Caco-2 (cell line): ENCODE measurements at regions of chr14 and their contacts with region 1.

Region 1: GRCh38 chr14:28608851-28609828 is 157.4 kb upstream of the FOXG1 start:
- DNase-seq: peak; percentile 51 to 60
- H3K4me3 ChIP-seq: no peak overlapping the region
- H3K4me3 Mint-ChIP-seq: no peak overlapping the region
- H3K27ac Mint-ChIP-seq: no peak overlapping the region
- H3K4me1 ChIP-seq: no peaks in the 10 kb centered on the region
- H3K4me1 Mint-ChIP-seq: no peaks in the 10 kb centered on the region
- H3K27me3 ChIP-seq: no peaks in the 10 kb centered on the region
- H3K27me3 Mint-ChIP-seq: peaks cover 2% of the 10 kb centered on the region
- CTCF ChIP-seq: peak; percentile 66 to 87

Region 2: GRCh38 chr14:27612121-27612520 is 997.0 kb before region 1 on chr14:
- CTCF ChIA-PET with region 1: no interaction called
- POLR2A ChIA-PET with region 1: no interaction called
- intact Hi-C with region 1: no loop called
- DNase-seq: no peak
- H3K4me3 ChIP-seq: no peak overlapping the region
- H3K4me3 Mint-ChIP-seq: no peak overlapping the region
- H3K27ac Mint-ChIP-seq: no peak overlapping the region
- H3K4me1 ChIP-seq: no peaks in the 10 kb centered on the region
- H3K4me1 Mint-ChIP-seq: no peaks in the 10 kb centered on the region
- H3K27me3 ChIP-seq: no peaks in the 10 kb centered on the region
- H3K27me3 Mint-ChIP-seq: no peaks in the 10 kb centered on the region
- CTCF ChIP-seq: no peak

Region 3: GRCh38 chr14:28294834-28295440 is 314.2 kb before region 1 on chr14:
- CTCF ChIA-PET with region 1: no interaction called
- POLR2A ChIA-PET with region 1: no interaction called
- intact Hi-C with region 1: loop called (anchors 1 kb)
- DNase-seq: peak in 1 of 2 experiments; percentile 17
- H3K4me3 ChIP-seq: no peak overlapping the region
- H3K4me3 Mint-ChIP-seq: no peak overlapping the region
- H3K27ac Mint-ChIP-seq: no peak overlapping the region
- H3K4me1 ChIP-seq: no peaks in the 10 kb centered on the region
- H3K4me1 Mint-ChIP-seq: no peaks in the 10 kb centered on the region
- H3K27me3 ChIP-seq: no peaks in the 10 kb centered on the region
- H3K27me3 Mint-ChIP-seq: no peaks in the 10 kb centered on the region
- CTCF ChIP-seq: peak; percentile 27 to 40

Region 4: GRCh38 chr14:28375295-28375694 is 233.8 kb before region 1 on chr14:
- CTCF ChIA-PET with region 1: no interaction called
- POLR2A ChIA-PET with region 1: no interaction called
- intact Hi-C with region 1: loop called (anchors 1 kb)
- DNase-seq: peak; percentile 34 to 37
- H3K4me3 ChIP-seq: no peak overlapping the region
- H3K4me3 Mint-ChIP-seq: no peak overlapping the region
- H3K27ac Mint-ChIP-seq: no peak overlapping the region
- H3K4me1 ChIP-seq: no peaks in the 10 kb centered on the region
- H3K4me1 Mint-ChIP-seq: no peaks in the 10 kb centered on the region
- H3K27me3 ChIP-seq: no peaks in the 10 kb centered on the region
- H3K27me3 Mint-ChIP-seq: no peaks in the 10 kb centered on the region
- CTCF ChIP-seq: peak; percentile 48 to 49

Region 5: DNA sequence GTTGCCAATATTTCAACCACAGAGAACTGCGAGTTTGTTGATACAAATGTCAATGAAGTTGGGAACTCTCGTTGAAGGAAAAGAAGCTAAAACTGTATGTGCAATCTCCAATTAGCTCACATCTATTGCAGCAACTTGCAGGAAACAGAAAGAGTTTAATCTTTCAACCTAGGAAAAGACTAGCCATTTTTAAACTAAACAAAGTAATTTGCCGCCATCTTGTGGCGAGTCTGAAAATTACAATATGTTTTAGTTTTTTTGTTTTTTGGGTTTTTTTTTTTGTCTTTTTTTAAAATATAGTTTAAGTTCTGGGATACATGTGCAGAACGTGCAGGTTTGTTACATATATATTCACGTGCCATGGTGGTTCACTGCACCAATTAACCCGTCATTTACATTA is 26.2 kb after region 1 on chr14:
- CTCF ChIA-PET with region 1: no interaction called
- POLR2A ChIA-PET with region 1: no interaction called
- intact Hi-C with region 1: loop called (anchors 2 kb)
- DNase-seq: peak in 1 of 2 experiments; percentile 16
- H3K4me3 ChIP-seq: no peak overlapping the region
- H3K4me3 Mint-ChIP-seq: no peak overlapping the region
- H3K27ac Mint-ChIP-seq: no peak overlapping the region
- H3K4me1 ChIP-seq: no peaks in the 10 kb centered on the region
- H3K4me1 Mint-ChIP-seq: no peaks in the 10 kb centered on the region
- H3K27me3 ChIP-seq: no peaks in the 10 kb centered on the region
- H3K27me3 Mint-ChIP-seq: peaks cover 4% of the 10 kb centered on the region
- CTCF ChIP-seq: peak; percentile 34 to 54